ENCODE measurements at regions of chr11 and their contacts with region 1.

Region 1: DNA sequence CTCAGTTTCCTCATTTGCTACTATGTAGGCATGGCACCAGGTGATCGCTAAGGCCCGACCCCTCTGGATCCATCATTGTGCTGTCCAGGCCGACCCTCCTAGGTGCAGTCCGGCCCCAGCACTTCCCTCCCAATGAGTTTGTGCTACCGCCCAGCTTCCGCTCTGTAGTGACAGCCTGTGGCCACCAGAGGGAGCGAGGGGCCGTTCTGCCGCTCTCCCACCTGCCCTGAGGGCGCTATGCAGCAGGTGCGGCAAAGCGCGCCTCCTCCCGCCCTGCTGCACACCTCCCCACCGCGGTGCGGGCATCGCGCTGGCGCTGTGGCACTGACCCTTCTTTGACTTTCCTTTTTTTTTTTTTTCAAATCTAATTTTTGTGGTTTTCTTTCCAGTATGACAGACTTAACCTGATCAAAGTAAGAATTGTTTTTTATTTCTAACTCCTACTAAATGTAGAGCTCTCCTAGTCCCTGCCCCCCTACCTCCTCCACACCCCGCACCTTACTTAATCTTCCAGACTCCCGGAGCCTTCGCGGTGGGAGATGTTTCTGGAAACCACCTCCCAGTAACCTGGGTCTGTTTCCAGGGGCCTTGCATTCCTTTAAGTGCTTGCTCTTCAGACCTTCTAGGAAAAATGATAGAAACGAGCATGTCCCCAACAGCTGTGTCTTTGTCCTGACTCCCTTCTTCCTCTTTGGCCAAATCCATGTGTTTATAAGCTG is 73.7 kb downstream of the SCN3B start:
- DNase-seq: peak; percentile 74 to 80 (median 76)
- ATAC-seq: peak; percentile 87
- H3K4me3 ChIP-seq: no peak overlapping the region
- H3K27ac ChIP-seq: no peak overlapping the region
- H3K4me1 ChIP-seq: peaks cover 18% of the 10 kb centered on the region
- H3K27me3 ChIP-seq: no peaks in the 10 kb centered on the region
- CTCF ChIP-seq: peak; percentile 86 to 96 (median 94)
- POLR2A ChIP-seq: no peak

Region 2: DNA sequence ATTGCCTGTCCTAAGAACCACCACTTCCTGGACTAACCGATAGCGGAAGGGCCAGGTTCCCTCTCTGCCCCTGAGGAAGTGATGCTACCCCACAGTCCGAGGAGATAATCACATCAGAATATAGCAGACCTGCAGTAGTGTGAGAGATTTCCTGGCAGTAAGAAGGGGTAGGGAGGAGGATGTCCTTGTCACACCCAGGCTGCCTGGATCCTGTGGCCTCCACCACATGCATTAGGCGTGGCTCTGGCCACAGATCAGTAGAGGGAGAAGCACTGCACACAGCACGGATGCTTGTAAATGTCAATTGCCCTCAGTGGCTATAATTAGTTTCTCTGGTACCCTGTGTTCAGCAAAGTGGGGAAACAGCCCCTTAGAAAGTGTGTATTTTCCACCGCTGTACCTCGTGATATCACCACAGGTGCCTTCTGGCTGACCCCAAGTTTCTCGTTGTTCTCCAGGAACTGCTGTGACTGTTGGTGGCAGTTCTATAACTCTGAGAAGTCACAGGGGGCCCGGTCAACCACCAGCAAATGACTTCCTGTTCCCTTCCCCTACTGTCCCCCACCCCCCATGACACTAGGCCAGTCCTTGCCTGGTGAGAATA is 863.4 kb before region 1 on chr11:
- intact Hi-C with region 1: no loop called
- DNase-seq: peak in 1 of 4 donors; percentile 38
- ATAC-seq: peak; percentile 34
- H3K4me3 ChIP-seq: no peak overlapping the region
- H3K27ac ChIP-seq: no peak overlapping the region
- H3K4me1 ChIP-seq: no peaks in the 10 kb centered on the region
- H3K27me3 ChIP-seq: no peaks in the 10 kb centered on the region
- CTCF ChIP-seq: no peak
- POLR2A ChIP-seq: no peak

Region 3: DNA sequence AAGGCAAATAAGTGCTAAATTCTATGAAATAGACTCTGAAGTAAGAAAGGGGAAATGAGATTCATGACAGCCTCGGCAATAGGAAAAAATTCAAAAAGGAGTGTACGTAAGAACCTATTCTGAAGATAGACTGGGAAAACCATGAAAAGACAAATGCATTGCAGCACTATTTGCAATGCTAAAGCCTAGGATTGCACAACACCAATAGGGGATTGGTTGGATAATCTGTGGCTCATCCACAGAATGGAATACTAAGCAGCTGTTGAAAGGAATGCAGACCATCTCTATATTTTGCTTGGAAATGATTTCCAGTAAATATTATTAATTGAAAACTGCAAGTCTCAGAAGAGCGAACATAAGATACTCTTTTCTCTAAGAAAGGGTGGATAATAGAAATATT is 294.0 kb before region 1 on chr11:
- intact Hi-C with region 1: no loop called
- DNase-seq: no peak
- ATAC-seq: no peak
- H3K4me3 ChIP-seq: no peak overlapping the region
- H3K27ac ChIP-seq: no peak overlapping the region
- H3K4me1 ChIP-seq: no peaks in the 10 kb centered on the region
- H3K27me3 ChIP-seq: no peaks in the 10 kb centered on the region
- CTCF ChIP-seq: no peak
- POLR2A ChIP-seq: no peak

Region 4: GRCh38 chr11:123519055-123519796 is 61.5 kb before region 1 on chr11:
- intact Hi-C with region 1: no loop called
- DNase-seq: no peak
- ATAC-seq: no peak
- H3K4me3 ChIP-seq: no peak overlapping the region
- H3K27ac ChIP-seq: no peak overlapping the region
- H3K4me1 ChIP-seq: no peaks in the 10 kb centered on the region
- H3K27me3 ChIP-seq: peaks cover 0 to 5% of the 10 kb centered on the region in 2 donors
- CTCF ChIP-seq: no peak
- POLR2A ChIP-seq: no peak

Region 5: GRCh38 chr11:123682696-123683410 is 102.1 kb after region 1 on chr11:
- intact Hi-C with region 1: no loop called
- DNase-seq: no peak
- ATAC-seq: no peak
- H3K4me3 ChIP-seq: no peak overlapping the region
- H3K27ac ChIP-seq: no peak overlapping the region
- H3K4me1 ChIP-seq: no peaks in the 10 kb centered on the region
- H3K27me3 ChIP-seq: no peaks in the 10 kb centered on the region
- CTCF ChIP-seq: no peak
- POLR2A ChIP-seq: no peak

Region 6: GRCh38 chr11:123707606-123708205 is 127.0 kb after region 1 on chr11:
- intact Hi-C with region 1: loop called (anchors 10 kb)
- DNase-seq: peak; percentile 51 to 69 (median 62)
- ATAC-seq: no peak
- H3K4me3 ChIP-seq: no peak overlapping the region
- H3K27ac ChIP-seq: no peak overlapping the region
- H3K4me1 ChIP-seq: no peaks in the 10 kb centered on the region
- H3K27me3 ChIP-seq: no peaks in the 10 kb centered on the region
- CTCF ChIP-seq: peak in 6 of 7 experiments; percentile 56 to 70 (median 66)
- POLR2A ChIP-seq: no peak